ENCODE measurements at regions of chr6 and their contacts with region 1.

Region 1: DNA sequence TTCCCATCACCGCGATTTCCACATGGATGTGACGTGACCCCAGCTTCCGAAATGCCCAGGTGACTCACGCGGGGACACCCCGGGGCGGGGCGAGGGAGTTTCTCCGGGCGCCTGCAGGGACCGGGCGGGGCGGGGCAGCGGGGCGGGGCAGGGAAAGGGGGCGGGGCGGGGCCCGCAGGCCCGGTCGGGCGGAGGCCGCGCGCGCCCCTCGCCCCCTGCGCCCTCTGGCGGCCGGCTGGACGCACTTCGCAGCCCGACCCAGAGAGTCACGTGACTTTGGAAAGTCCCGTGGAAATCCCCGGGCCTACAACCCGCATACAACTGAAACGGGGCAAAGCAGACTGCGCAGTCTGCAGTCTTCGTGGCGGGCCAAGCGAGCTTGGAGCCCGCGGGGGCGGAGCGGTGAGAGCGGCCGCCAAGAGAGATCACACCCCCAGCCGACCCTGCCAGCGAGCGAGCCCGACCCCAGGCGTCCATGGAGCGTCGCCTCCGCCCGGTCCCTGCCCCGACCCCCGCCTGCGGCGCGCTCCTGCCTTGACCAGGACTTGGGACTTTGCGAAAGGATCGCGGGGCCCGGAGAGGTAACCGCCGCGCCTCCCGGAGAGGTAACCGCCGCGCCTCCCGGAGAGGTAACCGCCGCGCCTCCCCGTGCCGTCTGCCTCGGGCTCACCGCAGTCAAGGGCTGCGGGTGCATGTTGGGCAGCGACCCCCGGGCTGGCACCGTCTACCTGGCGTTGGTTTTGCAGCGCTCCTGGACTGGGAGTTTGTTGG is at the start of gene TNFAIP3:
- DNase-seq: peak; percentile 96
- H3K4me3 ChIP-seq: peak within 1 kb of the TSS; percentile 54 to 88 (median 63)
- H3K27ac ChIP-seq: peak within 1 kb of the TSS; percentile 65
- H3K4me1 ChIP-seq: peaks cover 24% of the 10 kb centered on the region
- H3K27me3 ChIP-seq: no peaks in the 10 kb centered on the region
- CTCF ChIP-seq: peak; percentile 70 to 81
- POLR2A ChIP-seq: peak; percentile 45
- total RNA-seq, gene TNFAIP3: 4.2 and 8.6 TPM in 2 replicates

Region 2: GRCh38 chr6:137112067-137112355 is 755.1 kb before region 1 on chr6:
- CTCF ChIA-PET with region 1: no interaction called
- POLR2A ChIA-PET with region 1: no interaction called
- dilution Hi-C with region 1: no loop called
- intact Hi-C with region 1: no loop called
- DNase-seq: no peak
- H3K4me3 ChIP-seq: no peak overlapping the region
- H3K27ac ChIP-seq: no peak overlapping the region
- H3K4me1 ChIP-seq: no peaks in the 10 kb centered on the region
- H3K27me3 ChIP-seq: no peaks in the 10 kb centered on the region
- CTCF ChIP-seq: no peak
- POLR2A ChIP-seq: no peak

Region 3: DNA sequence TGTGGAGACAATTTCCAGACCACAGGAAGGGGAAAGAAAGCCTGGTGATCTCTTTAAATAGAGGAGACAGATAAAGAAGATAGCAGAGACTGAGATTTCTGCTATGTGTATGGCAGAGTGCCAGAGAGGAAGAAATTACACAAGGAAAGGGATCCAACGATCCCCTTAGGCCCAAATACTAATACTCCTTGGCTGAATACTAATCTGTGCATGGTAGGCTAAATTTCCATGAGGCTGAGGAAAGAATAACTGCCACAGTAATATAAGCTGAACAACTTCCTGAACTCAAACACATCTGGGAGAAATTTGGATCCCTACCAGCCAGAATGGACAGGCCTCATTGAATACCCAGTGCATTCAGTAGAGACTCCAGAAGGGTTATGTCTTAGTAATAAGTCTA is 83.4 kb before region 1 on chr6:
- CTCF ChIA-PET with region 1: no interaction called
- POLR2A ChIA-PET with region 1: no interaction called
- dilution Hi-C with region 1: no loop called
- intact Hi-C with region 1: no loop called
- DNase-seq: no peak
- H3K4me3 ChIP-seq: no peak overlapping the region
- H3K27ac ChIP-seq: no peak overlapping the region
- H3K4me1 ChIP-seq: no peaks in the 10 kb centered on the region
- H3K27me3 ChIP-seq: no peaks in the 10 kb centered on the region
- CTCF ChIP-seq: no peak
- POLR2A ChIP-seq: no peak

Region 4: DNA sequence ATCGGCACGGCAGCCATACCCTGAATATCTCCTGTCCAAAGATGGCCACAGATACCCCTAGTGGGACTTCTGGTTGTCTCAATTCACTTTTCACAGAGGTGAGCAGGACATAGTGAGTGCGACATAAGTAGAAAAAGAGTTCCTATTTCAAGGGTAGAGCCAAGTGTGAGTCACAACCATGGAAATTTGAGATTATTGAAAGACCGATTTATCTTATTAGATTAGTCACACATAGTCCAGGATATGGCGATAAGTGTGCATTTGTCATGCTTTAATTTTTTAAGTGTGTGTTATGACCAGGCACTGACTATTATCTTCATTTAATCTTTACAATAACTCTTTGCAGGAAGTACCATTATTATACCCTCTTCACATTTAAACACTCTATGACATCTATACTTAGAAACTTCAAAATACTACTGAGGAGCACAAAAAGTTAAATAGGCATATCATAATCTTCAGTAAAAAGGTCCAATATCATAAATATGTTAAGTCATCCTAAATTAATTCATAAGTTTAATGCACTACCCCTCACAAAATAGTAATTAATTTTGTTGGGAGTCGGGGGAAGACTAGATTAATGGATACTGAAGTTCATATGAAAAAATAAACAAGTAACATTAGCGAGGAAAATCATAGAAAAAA is 13.4 kb before region 1 on chr6:
- CTCF ChIA-PET with region 1: interaction called, 13 read pairs
- POLR2A ChIA-PET with region 1: no interaction called
- dilution Hi-C with region 1: no loop called
- intact Hi-C with region 1: no loop called
- DNase-seq: peak; percentile 82
- H3K4me3 ChIP-seq: no peak overlapping the region
- H3K27ac ChIP-seq: no peak overlapping the region
- H3K4me1 ChIP-seq: peaks cover 14% of the 10 kb centered on the region
- H3K27me3 ChIP-seq: no peaks in the 10 kb centered on the region
- CTCF ChIP-seq: no peak
- POLR2A ChIP-seq: no peak

Region 5: GRCh38 chr6:137938770-137939379 is 71.8 kb after region 1 on chr6:
- CTCF ChIA-PET with region 1: interaction called, 111 read pairs
- POLR2A ChIA-PET with region 1: no interaction called
- dilution Hi-C with region 1: no loop called
- intact Hi-C with region 1: loop called (anchors 1 kb)
- DNase-seq: no peak
- H3K4me3 ChIP-seq: no peak overlapping the region
- H3K27ac ChIP-seq: no peak overlapping the region
- H3K4me1 ChIP-seq: no peaks in the 10 kb centered on the region
- H3K27me3 ChIP-seq: no peaks in the 10 kb centered on the region
- CTCF ChIP-seq: no peak
- POLR2A ChIP-seq: no peak

Region 6: GRCh38 chr6:138001750-138002349 is 134.8 kb after region 1 on chr6:
- CTCF ChIA-PET with region 1: interaction called, 10 read pairs
- POLR2A ChIA-PET with region 1: no interaction called
- dilution Hi-C with region 1: no loop called
- intact Hi-C with region 1: loop called (anchors 2 kb)
- DNase-seq: peak; percentile 62
- H3K4me3 ChIP-seq: no peak overlapping the region
- H3K27ac ChIP-seq: no peak overlapping the region
- H3K4me1 ChIP-seq: no peaks in the 10 kb centered on the region
- H3K27me3 ChIP-seq: no peaks in the 10 kb centered on the region
- CTCF ChIP-seq: peak; percentile 69 to 82
- POLR2A ChIP-seq: no peak

Region 7: DNA sequence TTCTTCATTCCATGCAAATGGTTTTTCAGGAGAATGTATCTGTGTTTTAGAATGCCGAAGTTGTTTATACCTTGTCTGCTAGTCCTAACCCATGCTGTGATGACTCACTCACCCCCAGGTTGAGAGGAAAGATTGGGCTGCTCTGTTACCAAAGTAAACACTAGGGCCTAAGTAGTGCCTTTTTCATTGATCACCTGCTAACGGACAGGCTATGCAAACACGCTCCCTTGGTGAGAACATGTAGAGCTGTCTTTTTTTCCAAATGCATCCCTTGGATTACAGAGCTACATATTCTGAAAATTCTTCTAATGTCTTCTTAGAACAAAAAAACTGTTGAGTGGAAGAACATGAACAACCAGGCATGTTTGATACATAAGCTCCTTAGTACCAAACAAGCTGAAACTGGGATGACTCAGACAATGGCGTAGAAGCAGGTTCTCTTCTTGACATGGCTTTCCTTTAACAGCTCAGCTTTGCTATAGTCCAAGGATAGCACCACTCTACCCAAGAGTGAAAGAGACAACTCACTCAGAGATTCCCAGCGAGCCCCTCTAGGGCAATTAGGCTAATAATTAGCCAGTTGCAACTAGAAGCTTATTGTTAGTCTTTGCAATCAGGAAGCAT is 219.6 kb after region 1 on chr6:
- CTCF ChIA-PET with region 1: no interaction called
- POLR2A ChIA-PET with region 1: no interaction called
- dilution Hi-C with region 1: no loop called
- intact Hi-C with region 1: no loop called
- DNase-seq: no peak
- H3K4me3 ChIP-seq: no peak overlapping the region
- H3K27ac ChIP-seq: no peak overlapping the region
- H3K4me1 ChIP-seq: peaks cover 7% of the 10 kb centered on the region
- H3K27me3 ChIP-seq: peaks cover 0 to 3% of the 10 kb centered on the region in 2 experiments
- CTCF ChIP-seq: no peak
- POLR2A ChIP-seq: no peak

Measured in endothelial cell of umbilical vein (primary cell).